ENCODE measurements at regions of chr17 and their contacts with region 1.

Region 1: GRCh38 chr17:49694847-49695683 is 12.7 kb downstream of the SLC35B1 start:
- DNase-seq: peak; percentile 79
- ATAC-seq: peak; percentile 20

Region 2: GRCh38 chr17:48997083-48997826 is 697.8 kb before region 1 on chr17 and contains the start of gene IGF2BP1:
- intact Hi-C with region 1: loop called (anchors 5 kb)
- DNase-seq: no peak
- ATAC-seq: no peak
- total RNA-seq, gene IGF2BP1: not detected

Region 3: DNA sequence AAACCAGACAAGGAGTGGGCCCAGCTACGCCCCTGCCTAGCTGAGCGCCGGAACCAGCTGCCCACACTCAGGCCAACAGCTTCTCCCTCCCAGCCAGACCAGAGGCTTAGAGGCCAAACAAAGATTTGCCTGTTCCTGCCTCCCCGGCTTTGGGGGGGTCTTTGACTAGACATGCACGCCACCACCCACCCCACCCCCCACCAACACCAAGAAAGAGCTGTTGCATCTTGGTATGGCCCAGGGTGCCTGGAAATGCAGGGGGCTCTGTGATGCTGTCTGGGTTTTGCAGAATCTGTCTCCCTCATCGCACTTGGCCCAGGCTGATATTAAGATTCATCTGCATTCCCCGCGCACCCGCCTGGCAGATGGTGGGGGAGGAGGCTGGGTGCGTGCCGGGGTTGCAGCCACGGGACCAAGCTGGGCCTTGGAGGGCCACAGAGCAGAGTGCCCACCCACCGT is 120.7 kb before region 1 on chr17:
- intact Hi-C with region 1: loop called (anchors 5 kb)
- DNase-seq: no peak
- ATAC-seq: no peak

Region 4: GRCh38 chr17:49637050-49637449 is 58.0 kb before region 1 on chr17:
- intact Hi-C with region 1: no loop called
- DNase-seq: no peak
- ATAC-seq: no peak